ENCODE measurements at regions of chr16 and their contacts with region 1.

Region 1: DNA sequence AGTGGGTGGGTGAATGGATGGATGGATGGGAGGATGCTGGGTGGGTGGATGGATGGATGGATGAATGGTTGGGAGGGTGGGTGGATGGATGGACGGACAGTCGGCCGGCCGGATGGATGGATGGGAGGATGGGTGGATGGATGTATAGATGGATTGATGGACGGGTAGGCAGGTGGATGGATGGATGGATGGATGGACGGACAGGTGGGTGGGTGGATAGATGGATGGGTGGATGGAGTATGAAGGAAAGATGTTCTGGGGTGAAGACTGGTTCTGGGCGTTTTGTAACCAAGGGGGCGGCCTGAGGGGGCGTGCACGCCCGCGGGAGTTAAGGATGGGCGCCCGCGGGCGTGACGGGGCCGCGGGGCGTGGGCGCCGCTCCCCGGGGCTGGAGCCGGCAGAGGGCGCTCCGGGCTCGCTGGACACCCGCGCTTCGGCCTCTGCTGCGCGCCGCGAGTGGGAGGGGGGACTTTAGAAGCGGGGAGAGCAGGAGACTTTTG is at the start of gene NECAB2:
- DNase-seq: peak in 3 of 7 donors; percentile 53 to 67 (median 65)
- H3K4me3 ChIP-seq: peak within 1 kb of the TSS in 1 of 4 donors; percentile 43
- H3K27ac ChIP-seq: no peak within 1 kb of the TSS
- H3K4me1 ChIP-seq: no peaks in the 10 kb centered on the region
- H3K27me3 ChIP-seq: no peaks in the 10 kb centered on the region
- CTCF ChIP-seq: peak in 5 of 6 experiments; percentile 22 to 70 (median 62)
- POLR2A ChIP-seq: no peak
- total RNA-seq, gene NECAB2: 0.14 to 2.1 (median 0.34) TPM in 6 of 9 donors, not detected in the others

Region 2: GRCh38 chr16:83926726-83927397 is 41.0 kb before region 1 on chr16:
- intact Hi-C with region 1: loop called in 1 of 2 experiments (anchors 5 kb)
- DNase-seq: peak; percentile 76 to 90 (median 83)
- H3K4me3 ChIP-seq: peak overlapping the region in 1 of 4 donors; percentile 10
- H3K27ac ChIP-seq: peak overlapping the region in 2 of 5 donors; percentile 49 to 64
- H3K4me1 ChIP-seq: peaks cover 3 to 5% of the 10 kb centered on the region in 2 donors
- H3K27me3 ChIP-seq: no peaks in the 10 kb centered on the region
- CTCF ChIP-seq: peak; percentile 85 to 98 (median 88)
- POLR2A ChIP-seq: no peak

Region 3: DNA sequence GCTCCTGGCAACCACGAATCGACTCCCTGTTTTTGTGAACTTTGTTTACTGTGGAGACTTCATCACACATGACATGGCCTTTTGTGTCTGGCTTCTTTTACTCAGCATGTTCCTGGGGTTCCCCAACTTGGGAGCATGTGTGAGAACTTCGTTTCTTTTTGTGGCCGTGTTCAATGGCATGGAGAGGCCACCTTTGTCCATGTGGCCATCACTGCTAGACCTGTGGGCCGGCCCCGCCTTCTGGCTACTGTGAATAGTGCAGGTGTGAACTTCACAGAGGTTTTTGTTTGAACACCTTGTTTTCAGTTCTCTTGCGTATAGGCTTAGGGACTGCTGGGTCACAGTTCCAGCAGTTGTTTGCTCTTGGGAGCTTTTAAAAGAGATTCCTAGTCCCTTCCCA is 80.4 kb after region 1 on chr16:
- intact Hi-C with region 1: loop called in 1 of 2 experiments (anchors 5 kb)
- DNase-seq: no peak
- H3K4me3 ChIP-seq: no peak overlapping the region
- H3K27ac ChIP-seq: no peak overlapping the region
- H3K4me1 ChIP-seq: peaks cover 0 to 5% of the 10 kb centered on the region in 2 donors
- H3K27me3 ChIP-seq: no peaks in the 10 kb centered on the region
- CTCF ChIP-seq: no peak
- POLR2A ChIP-seq: no peak

Region 4: DNA sequence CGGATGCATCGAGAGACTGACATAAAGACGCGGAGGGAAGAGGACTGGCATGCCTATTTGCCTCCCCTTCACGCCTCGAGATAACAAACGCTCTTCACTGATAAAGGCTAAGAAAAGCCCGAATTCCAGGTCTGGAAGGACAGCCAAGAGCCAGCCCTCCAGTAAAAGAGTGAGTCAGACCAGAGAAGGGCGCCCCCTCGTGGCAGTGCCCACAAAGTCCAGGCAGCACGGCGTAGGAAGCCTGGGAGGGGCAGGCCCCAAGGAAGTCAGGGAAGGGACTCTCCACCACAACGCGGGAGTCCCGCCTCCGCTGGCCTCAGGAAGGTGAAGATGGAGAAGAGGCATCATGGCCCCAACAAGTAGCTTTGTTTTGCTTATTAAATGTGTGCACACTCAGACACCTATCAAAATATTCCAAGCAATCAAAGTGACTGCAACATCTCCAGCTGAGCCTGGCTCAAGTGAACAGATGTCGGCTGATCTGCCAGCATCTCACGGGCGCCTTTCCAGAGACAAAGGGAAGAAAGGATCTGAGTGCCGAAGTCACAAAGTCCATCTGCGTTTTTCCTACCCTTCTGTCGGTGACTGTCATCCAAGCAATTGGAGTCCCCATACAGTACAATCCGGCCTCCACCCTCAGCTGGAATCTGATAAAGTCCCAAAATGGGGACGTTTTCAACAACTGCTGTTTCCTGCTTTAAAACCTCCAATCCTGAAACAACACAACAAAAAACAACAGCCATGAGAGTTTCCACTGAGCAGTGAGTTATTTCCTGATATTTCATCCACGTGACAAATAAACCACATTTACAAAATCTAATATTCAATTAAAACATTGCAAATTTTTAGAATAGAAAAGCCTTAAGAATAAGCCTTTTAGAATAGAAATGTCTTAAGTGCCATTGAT is 95.1 kb after region 1 on chr16:
- intact Hi-C with region 1: loop called (anchors 5 kb)
- DNase-seq: peak; percentile 85 to 94 (median 88)
- H3K4me3 ChIP-seq: no peak overlapping the region
- H3K27ac ChIP-seq: peak overlapping the region in 1 of 5 donors; percentile 13
- H3K4me1 ChIP-seq: peaks cover 0 to 7% of the 10 kb centered on the region in 2 donors
- H3K27me3 ChIP-seq: no peaks in the 10 kb centered on the region
- CTCF ChIP-seq: peak; percentile 91 to 99 (median 92)
- POLR2A ChIP-seq: no peak

Region 5: DNA sequence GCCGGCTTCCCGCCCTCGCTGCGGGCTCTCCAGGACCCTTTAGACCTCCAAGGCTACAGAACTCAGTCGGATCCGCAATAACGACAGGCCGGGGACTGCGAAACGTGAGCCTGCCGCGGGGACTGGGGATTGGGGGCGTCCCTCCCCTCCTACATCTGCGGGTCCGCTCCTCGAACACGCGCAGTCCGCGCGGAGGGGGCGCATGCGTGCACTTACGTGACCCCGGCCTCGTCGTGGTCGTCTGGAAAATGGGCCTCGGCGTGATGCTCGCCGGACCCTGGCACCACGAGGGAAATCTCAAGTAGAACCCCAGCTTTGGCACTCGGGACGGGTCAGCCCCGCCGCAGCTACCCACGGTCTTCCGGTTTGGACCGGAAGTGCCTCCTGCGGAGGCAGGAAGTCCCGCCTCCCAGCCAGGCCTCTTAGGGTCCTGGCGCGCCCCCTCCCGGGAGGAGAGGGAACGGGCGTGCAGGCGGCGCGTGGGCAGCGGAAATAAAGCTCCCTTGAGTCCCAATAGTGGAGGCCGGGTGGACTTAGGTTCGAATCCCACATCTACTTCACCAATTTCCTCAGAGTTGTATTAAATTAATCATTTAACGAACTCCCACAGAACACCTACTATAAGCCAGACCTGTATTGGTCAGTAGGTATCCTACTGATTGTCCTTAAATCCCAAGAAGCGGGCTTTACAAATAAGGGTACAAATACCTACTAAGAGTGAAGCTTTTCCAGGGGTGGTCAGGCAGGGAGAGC is 219.0 kb after region 1 on chr16 and contains the start of gene TAF1C:
- intact Hi-C with region 1: loop called in 1 of 2 experiments (anchors 10 kb)
- DNase-seq: peak; percentile 87 to 98 (median 93)
- H3K4me3 ChIP-seq: peak within 1 kb of the TSS; percentile 24 to 89 (median 68)
- H3K27ac ChIP-seq: peak within 1 kb of the TSS in 4 of 5 donors; percentile 7 to 79 (median 50)
- H3K4me1 ChIP-seq: peaks cover 8 to 16% of the 10 kb centered on the region in 2 donors
- H3K27me3 ChIP-seq: no peaks in the 10 kb centered on the region
- CTCF ChIP-seq: peak; percentile 80 to 96 (median 92)
- POLR2A ChIP-seq: peak in 1 of 2 donors; percentile 28
- total RNA-seq, gene TAF1C: 18.9 to 66.7 (median 38.0) TPM

Region 6: DNA sequence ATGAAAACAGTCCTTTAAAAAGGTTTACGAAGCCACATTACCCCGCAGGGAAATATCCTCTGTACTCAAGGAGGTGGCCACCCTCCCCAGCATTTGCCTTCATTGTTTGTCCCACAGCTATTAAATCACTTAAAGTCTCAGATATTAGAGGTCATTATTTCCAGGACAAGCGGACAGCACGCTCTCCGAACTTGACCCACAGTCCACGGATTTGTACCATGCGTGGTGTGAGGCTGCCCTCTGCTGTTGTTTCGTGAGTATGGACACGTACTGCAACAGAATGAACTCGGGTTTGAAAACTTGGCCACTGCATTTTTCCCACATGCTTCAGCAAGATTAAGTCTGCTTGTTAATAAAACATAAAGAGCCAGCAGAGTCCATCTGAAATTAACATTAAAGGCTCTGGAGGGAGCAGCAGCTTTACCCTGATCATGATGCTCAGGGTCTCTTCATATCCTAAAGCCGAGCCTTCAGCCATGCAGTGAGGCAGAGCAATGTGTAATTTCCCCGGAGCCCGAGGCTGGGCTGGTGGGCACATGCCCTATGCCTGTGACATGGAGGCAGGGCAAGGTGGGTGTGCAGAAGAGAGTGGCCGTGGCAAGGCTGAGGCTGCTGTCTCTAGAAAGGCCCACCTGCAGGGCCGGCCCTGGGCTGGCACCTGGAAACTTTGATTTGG is 516.9 kb after region 1 on chr16:
- intact Hi-C with region 1: loop called in 1 of 2 experiments (anchors 10 kb)
- DNase-seq: peak; percentile 61 to 89 (median 78)
- H3K4me3 ChIP-seq: no peak overlapping the region
- H3K27ac ChIP-seq: no peak overlapping the region
- H3K4me1 ChIP-seq: no peaks in the 10 kb centered on the region
- H3K27me3 ChIP-seq: no peaks in the 10 kb centered on the region
- CTCF ChIP-seq: peak; percentile 63 to 93 (median 86)
- POLR2A ChIP-seq: no peak

Measured in adrenal gland (tissue), 19 donors.